AG04449 (cell line): ENCODE measurements at regions of chr3 and their contacts with region 1.

Region 1: GRCh38 chr3:9946112-9947024 is 5.8 kb downstream of the PRRT3 start:
- DNase-seq: no peak
- H3K4me3 ChIP-seq: peak overlapping the region; percentile 73
- CTCF ChIP-seq: peak; percentile 78

Region 2: DNA sequence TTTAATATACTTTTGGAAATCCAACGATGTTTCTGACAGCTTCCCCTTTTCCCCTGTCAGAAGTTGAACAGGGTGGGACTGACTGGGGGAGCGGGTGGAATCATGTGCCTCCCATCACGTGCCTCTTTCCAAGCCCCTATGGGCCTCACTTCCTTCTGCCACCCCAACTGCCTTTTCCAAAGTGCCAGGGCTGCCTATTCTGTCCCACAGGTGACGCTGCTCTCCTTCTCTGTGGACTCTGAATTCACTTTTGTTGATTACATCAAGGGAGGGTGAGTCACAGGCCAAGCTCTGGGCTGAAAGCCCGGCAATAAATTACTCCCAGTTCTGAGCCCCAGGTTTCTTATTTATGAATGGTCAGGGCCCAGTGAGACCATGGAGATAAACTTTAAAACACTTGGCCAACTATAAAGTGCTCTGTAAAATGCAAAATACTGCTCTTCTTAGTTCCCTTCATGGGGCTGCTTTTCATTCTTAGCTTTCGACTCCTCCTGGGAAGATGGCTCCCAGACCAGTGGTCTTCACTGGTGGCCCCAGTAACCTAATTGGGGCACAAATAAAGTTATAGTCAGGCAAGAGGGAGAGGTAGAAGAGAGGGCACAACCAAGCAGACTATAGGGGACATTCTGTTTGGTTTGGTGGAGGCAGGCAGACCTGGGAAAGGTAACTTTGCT is 230.5 kb before region 1 on chr3:
- CTCF ChIA-PET with region 1: interaction called, 19 read pairs
- POLR2A ChIA-PET with region 1: no interaction called
- DNase-seq: peak; percentile 29
- H3K4me3 ChIP-seq: no peak overlapping the region
- CTCF ChIP-seq: peak; percentile 78

Region 3: DNA sequence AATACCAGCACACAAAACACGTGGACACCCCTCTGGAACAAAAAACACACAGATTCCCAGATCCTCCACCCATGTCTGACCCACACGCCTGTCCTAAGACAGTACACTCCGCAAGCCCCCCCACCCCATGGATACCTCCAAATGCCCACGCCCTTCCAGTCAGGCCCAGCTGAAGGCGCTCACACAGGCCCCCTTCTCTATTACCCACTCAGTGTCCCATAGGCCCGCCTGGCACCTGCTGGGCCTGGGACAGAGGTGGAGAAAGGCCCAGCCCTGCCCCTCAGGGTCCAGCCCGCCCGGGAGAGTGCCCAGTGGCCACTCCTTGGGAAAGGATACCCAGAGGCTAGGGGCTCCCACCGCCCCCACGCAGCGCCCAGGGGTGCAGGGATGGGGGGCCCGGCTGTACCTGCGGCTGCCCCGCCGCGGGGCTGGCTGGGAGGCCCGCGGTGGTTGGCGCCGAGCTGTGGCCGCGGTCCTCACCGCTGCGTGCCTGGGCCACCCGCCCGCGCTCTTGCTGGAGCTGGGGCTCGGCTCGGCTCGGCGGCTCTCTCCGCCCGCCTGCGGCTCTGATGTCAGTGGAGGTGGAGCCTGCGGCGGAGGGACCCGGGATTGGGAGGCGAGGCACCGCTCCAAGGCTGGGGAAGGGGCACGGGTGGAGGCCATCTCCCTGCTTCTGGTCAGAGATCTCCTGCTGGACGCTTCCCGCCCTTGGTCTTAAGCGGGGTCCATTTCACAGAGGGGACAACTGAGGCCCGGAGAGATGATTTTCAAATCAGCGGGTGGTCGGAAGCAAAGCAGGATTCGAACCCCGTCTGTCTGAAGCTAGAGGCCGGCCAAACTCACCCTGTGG is 176.7 kb before region 1 on chr3 and contains the start of gene CAMK1:
- CTCF ChIA-PET with region 1: no interaction called
- POLR2A ChIA-PET with region 1: no interaction called
- DNase-seq: no peak
- H3K4me3 ChIP-seq: peak within 1 kb of the TSS; percentile 66
- CTCF ChIP-seq: no peak

Region 4: DNA sequence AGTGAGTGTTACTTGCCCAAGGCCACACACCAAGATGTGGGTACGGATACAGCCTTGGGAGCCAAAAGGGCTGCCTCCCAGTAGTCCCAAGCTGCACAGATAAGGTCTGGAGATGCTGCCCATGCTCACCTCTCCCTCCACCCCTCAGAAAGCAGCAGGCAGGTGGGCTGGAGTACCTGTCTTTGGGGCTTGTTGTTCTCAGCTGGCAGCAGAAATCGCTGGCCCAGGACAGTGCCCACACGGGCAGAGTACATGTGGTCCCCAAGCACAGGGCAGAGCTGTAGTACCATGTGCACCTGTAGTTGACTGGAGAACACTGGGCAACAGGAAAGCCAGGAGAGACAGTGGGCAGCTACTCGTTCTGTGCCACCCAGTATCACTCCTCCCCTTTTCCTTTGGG is 107.5 kb before region 1 on chr3:
- CTCF ChIA-PET with region 1: interaction called, 35 read pairs
- POLR2A ChIA-PET with region 1: interaction called, 7 read pairs
- DNase-seq: no peak
- H3K4me3 ChIP-seq: no peak overlapping the region
- CTCF ChIP-seq: no peak

Region 5: GRCh38 chr3:9843715-9844438 is 102.5 kb before region 1 on chr3 and contains the start of gene RPUSD3:
- CTCF ChIA-PET with region 1: interaction called, 35 read pairs
- POLR2A ChIA-PET with region 1: interaction called, 7 read pairs
- DNase-seq: peak; percentile 55
- H3K4me3 ChIP-seq: peak within 1 kb of the TSS; percentile 94
- CTCF ChIP-seq: no peak

Region 6: DNA sequence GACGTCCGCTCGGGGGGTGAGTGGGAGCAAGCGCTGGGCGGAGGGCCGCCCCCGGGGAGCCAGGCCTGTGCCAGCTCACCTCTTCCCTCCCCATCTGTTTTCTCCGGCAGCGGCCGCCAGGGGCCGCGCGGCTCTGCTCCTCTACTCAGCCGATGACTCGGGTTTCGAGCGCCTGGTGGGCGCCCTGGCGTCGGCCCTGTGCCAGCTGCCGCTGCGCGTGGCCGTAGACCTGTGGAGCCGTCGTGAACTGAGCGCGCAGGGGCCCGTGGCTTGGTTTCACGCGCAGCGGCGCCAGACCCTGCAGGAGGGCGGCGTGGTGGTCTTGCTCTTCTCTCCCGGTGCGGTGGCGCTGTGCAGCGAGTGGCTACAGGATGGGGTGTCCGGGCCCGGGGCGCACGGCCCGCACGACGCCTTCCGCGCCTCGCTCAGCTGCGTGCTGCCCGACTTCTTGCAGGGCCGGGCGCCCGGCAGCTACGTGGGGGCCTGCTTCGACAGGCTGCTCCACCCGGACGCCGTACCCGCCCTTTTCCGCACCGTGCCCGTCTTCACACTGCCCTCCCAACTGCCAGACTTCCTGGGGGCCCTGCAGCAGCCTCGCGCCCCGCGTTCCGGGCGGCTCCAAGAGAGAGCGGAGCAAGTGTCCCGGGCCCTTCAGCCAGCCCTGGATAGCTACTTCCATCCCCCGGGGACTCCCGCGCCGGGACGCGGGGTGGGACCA is 13.4 kb before region 1 on chr3:
- CTCF ChIA-PET with region 1: interaction called, 84 read pairs
- POLR2A ChIA-PET with region 1: interaction called, 22 read pairs
- DNase-seq: no peak
- H3K4me3 ChIP-seq: peak overlapping the region; percentile 77
- CTCF ChIP-seq: peak; percentile 89

Region 7: GRCh38 chr3:9957214-9957613 is 10.8 kb after region 1 on chr3:
- CTCF ChIA-PET with region 1: interaction called, 20 read pairs
- POLR2A ChIA-PET with region 1: interaction called, 5 read pairs
- DNase-seq: no peak
- H3K4me3 ChIP-seq: no peak overlapping the region
- CTCF ChIP-seq: no peak

Region 8: GRCh38 chr3:9969632-9970019 is 23.3 kb after region 1 on chr3:
- CTCF ChIA-PET with region 1: interaction called, 18 read pairs
- POLR2A ChIA-PET with region 1: no interaction called
- DNase-seq: no peak
- H3K4me3 ChIP-seq: no peak overlapping the region
- CTCF ChIP-seq: no peak

Region 9: DNA sequence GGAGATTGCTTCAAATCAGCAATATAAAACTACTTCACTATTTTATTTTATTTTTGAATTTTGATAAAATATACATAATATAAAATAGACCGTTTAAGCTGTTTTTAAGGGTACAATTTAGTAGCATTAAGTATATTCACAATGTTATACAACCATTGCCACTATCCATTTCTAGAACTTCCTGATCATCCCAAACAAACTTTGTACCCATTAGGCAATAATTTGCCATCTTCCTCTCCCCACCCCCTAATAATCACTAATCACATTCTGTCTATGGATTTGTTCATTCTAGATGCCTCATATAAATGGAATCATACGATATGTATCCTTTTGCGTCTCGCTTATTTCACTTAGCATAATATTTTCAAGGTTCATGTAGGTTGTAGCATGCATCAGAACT is 108.7 kb after region 1 on chr3:
- CTCF ChIA-PET with region 1: no interaction called
- POLR2A ChIA-PET with region 1: no interaction called
- DNase-seq: no peak
- H3K4me3 ChIP-seq: no peak overlapping the region
- CTCF ChIP-seq: no peak

Region 10: GRCh38 chr3:10392244-10392643 is 445.9 kb after region 1 on chr3:
- CTCF ChIA-PET with region 1: no interaction called
- POLR2A ChIA-PET with region 1: no interaction called
- DNase-seq: no peak
- H3K4me3 ChIP-seq: no peak overlapping the region
- CTCF ChIP-seq: peak; percentile 6

Region 11: GRCh38 chr3:11356269-11356668 is 1409.9 kb after region 1 on chr3:
- CTCF ChIA-PET with region 1: no interaction called
- POLR2A ChIA-PET with region 1: no interaction called
- DNase-seq: no peak
- H3K4me3 ChIP-seq: no peak overlapping the region
- CTCF ChIP-seq: no peak